PC-9 (cell line): ENCODE measurements at regions of chr15 and their contacts with region 1.

Region 1: DNA sequence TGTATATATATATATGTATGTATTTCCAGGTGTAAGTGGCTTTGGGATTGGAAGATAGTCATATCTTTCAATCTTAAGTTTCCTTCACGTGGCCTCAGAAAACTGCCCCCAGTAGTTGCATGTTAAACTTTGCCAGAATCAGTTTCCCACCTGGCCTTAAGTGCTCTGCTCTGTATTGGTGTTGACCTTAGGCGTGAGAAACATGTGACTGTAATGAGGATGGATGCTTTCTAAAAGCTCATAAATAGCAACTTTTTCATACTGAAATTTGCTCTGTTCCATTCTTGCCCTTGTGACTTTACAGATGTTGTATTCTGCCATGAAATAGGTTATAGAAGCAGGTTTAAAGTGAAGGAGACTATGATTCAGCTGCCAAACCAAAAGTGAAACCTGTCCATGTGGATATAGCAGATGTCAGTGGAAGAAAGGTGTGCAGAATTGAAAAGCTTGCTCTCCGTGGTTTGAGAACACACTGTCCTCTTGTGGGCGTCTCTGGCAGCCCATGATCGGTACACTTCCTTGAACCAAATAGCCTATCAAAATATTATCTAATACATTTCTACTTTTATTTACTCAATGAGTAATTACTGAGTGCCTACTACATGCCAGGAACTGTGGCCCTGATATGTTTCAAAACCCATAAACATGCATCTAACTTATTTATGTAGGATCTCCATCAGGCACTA is 15.8 kb downstream of the SCG5 start:
- DNase-seq: peak in 1 of 2 experiments; percentile 21
- H3K4me3 ChIP-seq: no peak overlapping the region
- H3K27ac ChIP-seq: no peak overlapping the region
- H3K4me1 ChIP-seq: peaks cover 19% of the 10 kb centered on the region
- H3K27me3 ChIP-seq: no peaks in the 10 kb centered on the region
- CTCF ChIP-seq: no peak

Region 2: DNA sequence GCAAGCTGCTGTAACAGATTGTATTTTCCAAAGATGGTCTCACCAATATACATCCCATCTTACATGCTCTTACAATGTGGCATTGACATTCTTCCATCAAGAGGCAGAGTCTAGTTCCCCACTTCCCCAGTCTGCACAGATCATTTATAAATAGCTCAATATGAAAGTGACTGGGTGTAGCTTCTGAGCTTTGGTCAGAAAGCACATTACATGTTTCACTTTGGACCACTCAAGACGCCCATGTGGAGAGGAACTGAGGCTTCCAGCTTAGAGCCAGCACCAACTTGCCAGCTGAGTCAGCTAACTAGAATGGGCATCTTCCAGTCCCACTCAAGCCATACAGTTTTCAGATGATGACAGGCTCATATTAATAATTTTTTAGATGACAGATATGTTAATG is 106.0 kb after region 1 on chr15:
- CTCF ChIA-PET with region 1: no interaction called
- POLR2A ChIA-PET with region 1: no interaction called
- intact Hi-C with region 1: no loop called
- DNase-seq: no peak
- H3K4me3 ChIP-seq: no peak overlapping the region
- H3K27ac ChIP-seq: no peak overlapping the region
- H3K4me1 ChIP-seq: no peaks in the 10 kb centered on the region
- H3K27me3 ChIP-seq: no peaks in the 10 kb centered on the region
- CTCF ChIP-seq: no peak

Region 3: DNA sequence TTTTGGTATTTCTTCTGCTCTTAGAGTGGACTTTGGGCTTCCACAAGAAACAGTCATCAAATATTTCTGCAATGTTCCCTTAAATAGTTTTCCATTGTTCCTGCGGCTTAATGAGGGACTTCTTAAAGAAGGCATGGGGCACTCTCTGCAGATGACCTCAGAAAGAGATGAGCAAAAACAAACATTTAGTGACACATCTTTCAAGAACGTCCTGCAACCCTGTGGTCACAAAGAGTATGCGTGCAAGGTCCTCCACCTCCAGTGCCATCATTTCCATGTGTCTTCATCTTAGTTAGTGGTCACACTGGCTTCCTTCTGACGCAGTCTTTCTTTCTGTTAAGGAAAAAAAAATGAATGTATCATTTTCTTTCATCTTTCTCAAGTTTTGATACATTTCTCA is 116.7 kb after region 1 on chr15:
- CTCF ChIA-PET with region 1: no interaction called
- POLR2A ChIA-PET with region 1: no interaction called
- intact Hi-C with region 1: loop called (anchors 5 kb)
- DNase-seq: peak; percentile 52 to 76
- H3K4me3 ChIP-seq: no peak overlapping the region
- H3K27ac ChIP-seq: peak overlapping the region; percentile 61
- H3K4me1 ChIP-seq: peaks cover 18% of the 10 kb centered on the region
- H3K27me3 ChIP-seq: no peaks in the 10 kb centered on the region
- CTCF ChIP-seq: no peak